Activated B cell treated with CpG ODN at 0.5 μM for 24 hours (primary cell): ENCODE measurements at regions of chr16 and their contacts with region 1.

Region 1: DNA sequence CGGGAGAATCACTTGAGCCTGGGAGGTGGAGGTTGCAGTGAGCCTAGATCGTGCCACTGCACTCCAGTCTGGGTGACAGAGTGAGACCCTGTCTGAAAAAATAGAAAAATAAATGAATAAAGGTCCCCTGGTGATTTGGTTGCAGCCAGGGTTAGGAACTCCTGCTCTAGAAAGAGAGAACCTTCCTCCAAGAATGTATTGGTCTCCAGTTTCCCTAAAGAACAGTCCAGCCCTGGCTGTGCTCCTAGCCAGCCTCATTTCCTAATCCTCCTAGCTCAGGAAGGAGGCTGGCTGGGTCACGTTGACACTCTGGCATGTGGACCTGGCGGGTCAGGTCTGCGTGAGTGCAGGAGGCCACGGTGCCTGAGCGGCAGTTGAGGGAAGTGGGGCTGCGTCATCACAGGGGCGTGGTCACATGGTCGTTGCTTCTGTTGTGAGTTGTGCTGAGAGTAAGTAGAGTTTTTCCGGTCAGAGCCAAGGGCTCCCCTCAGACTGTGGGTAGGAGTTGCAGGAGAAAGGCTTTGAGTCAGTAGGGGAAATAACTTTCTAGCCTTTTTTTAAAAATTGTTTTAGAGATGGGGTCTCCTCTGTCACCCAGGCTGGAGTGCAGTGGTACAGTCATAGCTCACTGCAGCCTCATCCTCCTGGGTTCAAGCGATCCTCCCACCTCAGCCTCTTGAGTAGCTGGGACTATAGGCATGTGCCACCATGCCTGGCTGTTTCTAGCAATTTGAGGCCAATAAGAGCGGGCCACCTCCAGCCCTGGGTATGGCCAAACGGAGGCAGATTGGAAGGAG is 193.9 kb upstream of the CIBAR2 start:
- DNase-seq: peak; percentile 72
- ATAC-seq: peak; percentile 69
- H3K4me3 Mint-ChIP-seq: peak overlapping the region; percentile 29
- H3K27ac Mint-ChIP-seq: peak overlapping the region; percentile 71
- H3K4me1 Mint-ChIP-seq: peaks cover 64% of the 10 kb centered on the region
- H3K27me3 Mint-ChIP-seq: peaks cover 2% of the 10 kb centered on the region
- CTCF ChIP-seq: no peak

Region 2: GRCh38 chr16:85330694-85331188 is 24.5 kb after region 1 on chr16:
- CTCF ChIA-PET with region 1: interaction called, 11 read pairs
- POLR2A ChIA-PET with region 1: interaction called, 3 read pairs
- intact Hi-C with region 1: loop called (anchors 1 kb)
- DNase-seq: no peak
- ATAC-seq: peak; percentile 70
- H3K4me3 Mint-ChIP-seq: no peak overlapping the region
- H3K27ac Mint-ChIP-seq: no peak overlapping the region
- H3K4me1 Mint-ChIP-seq: peaks cover 22% of the 10 kb centered on the region
- H3K27me3 Mint-ChIP-seq: peaks cover 36% of the 10 kb centered on the region
- CTCF ChIP-seq: no peak

Region 3: GRCh38 chr16:85347213-85347591 is 41.0 kb after region 1 on chr16:
- CTCF ChIA-PET with region 1: no interaction called
- POLR2A ChIA-PET with region 1: no interaction called
- intact Hi-C with region 1: no loop called
- DNase-seq: no peak
- ATAC-seq: no peak
- H3K4me3 Mint-ChIP-seq: no peak overlapping the region
- H3K27ac Mint-ChIP-seq: no peak overlapping the region
- H3K4me1 Mint-ChIP-seq: no peaks in the 10 kb centered on the region
- H3K27me3 Mint-ChIP-seq: no peaks in the 10 kb centered on the region
- CTCF ChIP-seq: no peak

Region 4: GRCh38 chr16:85393674-85394483 is 87.7 kb after region 1 on chr16:
- CTCF ChIA-PET with region 1: no interaction called
- POLR2A ChIA-PET with region 1: no interaction called
- intact Hi-C with region 1: loop called (anchors 1 kb)
- DNase-seq: peak; percentile 65
- ATAC-seq: peak; percentile 83
- H3K4me3 Mint-ChIP-seq: no peak overlapping the region
- H3K27ac Mint-ChIP-seq: no peak overlapping the region
- H3K4me1 Mint-ChIP-seq: no peaks in the 10 kb centered on the region
- H3K27me3 Mint-ChIP-seq: peaks cover 16% of the 10 kb centered on the region
- CTCF ChIP-seq: no peak

Region 5: GRCh38 chr16:85428168-85428898 is 122.1 kb after region 1 on chr16:
- CTCF ChIA-PET with region 1: interaction called, 6 read pairs
- POLR2A ChIA-PET with region 1: interaction called, 3 read pairs
- intact Hi-C with region 1: loop called (anchors 1 kb)
- DNase-seq: peak; percentile 40
- ATAC-seq: peak; percentile 76
- H3K4me3 Mint-ChIP-seq: no peak overlapping the region
- H3K27ac Mint-ChIP-seq: no peak overlapping the region
- H3K4me1 Mint-ChIP-seq: no peaks in the 10 kb centered on the region
- H3K27me3 Mint-ChIP-seq: peaks cover 20% of the 10 kb centered on the region
- CTCF ChIP-seq: no peak